ENCODE measurements at regions of chr9 and their contacts with region 1.

Region 1: GRCh38 chr9:31347082-31347617 is 1037.3 kb upstream of the ACO1 start:
- DNase-seq: peak; percentile 10
- H3K4me3 Mint-ChIP-seq: peak overlapping the region; percentile 66
- H3K27ac Mint-ChIP-seq: peak overlapping the region; percentile 93
- H3K4me1 Mint-ChIP-seq: peaks cover 27% of the 10 kb centered on the region
- H3K27me3 Mint-ChIP-seq: no peaks in the 10 kb centered on the region

Region 2: DNA sequence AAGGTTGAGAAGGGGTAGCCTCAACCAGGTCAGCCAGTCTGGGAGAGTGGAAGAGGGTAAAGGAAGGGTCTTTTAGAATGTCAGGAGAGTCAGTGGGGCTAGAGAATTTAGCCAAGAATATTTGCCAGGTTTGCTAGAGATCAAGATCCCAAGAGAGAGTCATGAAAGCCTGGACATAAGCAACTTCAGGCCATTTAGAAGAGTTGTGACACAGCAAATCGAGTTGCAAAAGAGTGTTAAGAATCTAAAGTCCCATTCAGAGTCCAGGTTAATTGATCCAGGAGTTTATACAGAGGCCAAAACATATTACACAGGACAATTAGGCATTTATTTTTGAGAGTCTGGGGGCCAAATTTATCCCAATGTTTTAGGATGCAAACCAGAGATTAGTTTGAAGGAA is 222.8 kb before region 1 on chr9:
- CTCF ChIA-PET with region 1: no interaction called
- intact Hi-C with region 1: no loop called
- DNase-seq: no peak
- H3K4me3 Mint-ChIP-seq: no peak overlapping the region
- H3K27ac Mint-ChIP-seq: no peak overlapping the region
- H3K4me1 Mint-ChIP-seq: peaks cover 9% of the 10 kb centered on the region
- H3K27me3 Mint-ChIP-seq: no peaks in the 10 kb centered on the region

Region 3: DNA sequence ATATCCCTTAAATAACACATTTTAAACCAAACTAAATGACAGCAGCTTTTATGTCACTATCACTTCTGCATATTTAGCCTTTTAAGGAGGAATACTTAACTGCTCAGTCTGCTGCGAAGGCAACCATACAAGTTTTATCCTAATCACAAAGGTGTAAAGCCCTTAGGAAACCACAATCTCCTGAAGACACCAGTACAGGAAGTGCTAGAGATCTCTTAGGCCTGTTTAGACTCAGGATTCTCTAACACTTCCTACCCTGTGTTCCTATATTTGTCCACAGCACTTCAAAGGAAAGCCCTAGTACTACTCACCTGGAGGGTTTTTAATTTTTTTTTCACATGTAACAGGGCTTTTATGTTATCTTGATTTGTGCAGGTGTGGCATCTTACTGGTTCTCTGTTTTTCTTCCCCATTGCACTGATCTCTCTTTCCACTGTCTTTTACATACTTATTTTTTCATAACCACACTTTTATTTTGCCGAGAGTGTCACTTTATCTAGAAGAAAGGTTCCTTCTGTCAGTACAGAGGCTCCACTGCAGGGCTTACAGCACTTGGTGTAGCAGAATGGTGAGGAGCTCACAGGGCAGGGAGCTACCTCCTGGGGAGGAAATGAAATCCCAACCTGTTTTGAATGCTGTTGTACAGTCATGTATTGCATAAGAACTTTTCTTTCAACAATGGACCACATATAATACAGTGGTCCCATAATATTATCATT is 23.3 kb before region 1 on chr9:
- CTCF ChIA-PET with region 1: no interaction called
- intact Hi-C with region 1: loop called (anchors 2 kb)
- DNase-seq: no peak
- H3K4me3 Mint-ChIP-seq: no peak overlapping the region
- H3K27ac Mint-ChIP-seq: peak overlapping the region; percentile 71
- H3K4me1 Mint-ChIP-seq: peaks cover 25% of the 10 kb centered on the region
- H3K27me3 Mint-ChIP-seq: no peaks in the 10 kb centered on the region

Region 4: GRCh38 chr9:31390356-31391025 is 43.3 kb after region 1 on chr9:
- CTCF ChIA-PET with region 1: no interaction called
- intact Hi-C with region 1: loop called (anchors 2 kb)
- DNase-seq: peak; percentile 6
- H3K4me3 Mint-ChIP-seq: no peak overlapping the region
- H3K27ac Mint-ChIP-seq: peak overlapping the region; percentile 21
- H3K4me1 Mint-ChIP-seq: peaks cover 17% of the 10 kb centered on the region
- H3K27me3 Mint-ChIP-seq: no peaks in the 10 kb centered on the region

Region 5: DNA sequence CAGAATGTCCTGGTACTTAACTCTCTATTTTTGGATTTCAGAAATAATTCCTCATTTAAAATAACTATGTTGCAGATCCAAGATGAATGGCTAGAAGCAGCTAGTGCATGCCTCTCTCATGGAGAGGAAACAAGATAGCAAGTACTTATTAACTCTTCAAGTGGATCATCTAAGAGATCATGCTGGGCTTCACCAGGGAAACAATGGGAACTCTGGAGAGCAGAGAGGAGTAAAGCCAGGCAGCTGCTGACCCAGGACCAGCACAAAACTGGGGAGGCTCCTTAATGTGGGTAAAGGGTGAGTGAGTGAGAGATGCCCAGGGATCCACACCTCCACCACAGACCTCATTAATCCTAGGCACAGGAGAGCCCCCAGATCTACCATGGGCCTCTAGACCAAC is 139.5 kb after region 1 on chr9:
- CTCF ChIA-PET with region 1: no interaction called
- intact Hi-C with region 1: no loop called
- DNase-seq: no peak
- H3K4me3 Mint-ChIP-seq: no peak overlapping the region
- H3K27ac Mint-ChIP-seq: no peak overlapping the region
- H3K4me1 Mint-ChIP-seq: no peaks in the 10 kb centered on the region
- H3K27me3 Mint-ChIP-seq: no peaks in the 10 kb centered on the region